ENCODE measurements at regions of chr11 and their contacts with region 1.

Region 1: GRCh38 chr11:46238967-46239800 is 38.3 kb upstream of the CREB3L1 start:
- ATAC-seq: peak; percentile 54 to 84 (median 82)
- H3K4me3 ChIP-seq: peak overlapping the region; percentile 12 to 27 (median 21)
- H3K27ac ChIP-seq: peak overlapping the region; percentile 85 to 90
- H3K4me1 ChIP-seq: peaks cover 32 to 38% of the 10 kb centered on the region in 2 donors

Region 2: DNA sequence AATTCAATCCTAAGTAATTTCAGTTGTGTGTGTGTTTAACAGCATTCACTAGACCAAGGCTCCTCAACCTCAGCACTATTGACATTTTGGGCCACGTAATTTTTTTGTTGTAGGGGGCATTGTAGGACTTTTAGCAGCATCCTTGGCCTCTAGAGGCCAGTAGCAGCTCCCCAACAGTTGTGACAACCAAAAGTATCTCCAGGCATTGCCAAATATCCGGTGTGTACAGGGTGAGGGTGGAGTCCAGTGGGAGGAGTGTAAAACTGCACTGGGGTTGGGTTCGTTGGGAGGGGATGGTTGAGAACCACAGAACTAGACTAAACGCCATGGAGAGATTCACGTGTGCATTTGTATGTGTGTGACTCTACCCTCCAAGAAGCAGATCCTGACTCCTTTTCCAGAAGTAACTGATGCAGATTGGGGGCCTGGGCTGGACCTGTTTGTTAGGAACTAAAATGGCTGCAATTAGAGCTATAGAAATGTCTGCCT is 112.0 kb before region 1 on chr11:
- in situ Hi-C with region 1: loop called in 1 of 9 experiments (anchors 25 kb)
- ATAC-seq: peak in 3 of 8 experiments; percentile 94 to 96 (median 95)
- H3K4me3 ChIP-seq: no peak overlapping the region
- H3K27ac ChIP-seq: no peak overlapping the region
- H3K4me1 ChIP-seq: peaks cover 0 to 6% of the 10 kb centered on the region in 2 donors

Region 3: GRCh38 chr11:46315033-46315738 is 76.0 kb after region 1 on chr11:
- in situ Hi-C with region 1: loop called in 1 of 9 experiments (anchors 10 kb)
- ATAC-seq: peak in 5 of 8 experiments; percentile 22 to 97 (median 87)
- H3K4me3 ChIP-seq: no peak overlapping the region
- H3K27ac ChIP-seq: no peak overlapping the region
- H3K4me1 ChIP-seq: no peaks in the 10 kb centered on the region

Region 4: DNA sequence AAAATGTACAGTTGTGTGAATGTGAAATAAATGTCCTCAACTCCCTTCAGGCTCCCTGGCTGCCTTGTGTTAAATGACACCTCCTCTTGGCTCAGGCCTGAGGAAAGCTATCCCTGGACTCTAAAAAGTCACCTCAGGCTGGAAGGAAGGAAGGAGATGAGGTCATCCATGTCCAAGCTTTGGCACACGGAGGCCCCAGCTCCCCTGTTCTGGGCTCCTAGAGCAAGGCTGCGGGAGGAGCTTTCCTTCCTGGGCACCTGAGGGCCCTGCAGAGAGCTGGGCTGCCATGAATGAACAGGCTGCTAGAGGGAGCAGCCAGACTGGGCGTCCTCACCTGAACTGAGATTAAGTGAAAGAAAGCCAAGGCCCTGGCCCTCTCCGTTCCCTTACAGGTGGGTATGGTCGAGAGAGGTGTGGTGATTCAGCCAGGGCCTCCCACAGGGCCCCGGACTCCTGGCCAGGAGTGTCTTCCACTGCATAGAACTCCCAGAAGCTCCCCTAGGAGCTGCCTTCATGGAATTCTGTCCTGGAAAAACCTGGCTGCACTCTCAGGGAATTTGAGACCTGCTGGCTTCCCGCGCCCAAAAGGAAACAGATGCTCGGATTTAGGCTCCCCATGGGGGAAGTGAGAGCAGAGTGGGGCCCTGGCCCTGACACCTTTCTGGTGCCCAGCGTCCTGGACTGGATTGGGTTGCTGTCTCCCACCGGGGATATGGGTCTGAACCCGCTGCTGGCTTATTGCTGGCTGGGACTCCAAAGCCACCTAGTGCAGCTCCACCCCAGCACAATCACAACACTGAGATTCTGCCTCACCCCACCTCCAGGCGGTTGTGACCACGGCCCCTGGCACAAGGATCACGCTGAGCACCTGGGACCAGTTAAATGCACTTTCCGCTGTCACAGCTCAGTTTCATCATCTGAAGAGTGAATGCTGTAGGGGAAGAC is 1091.1 kb after region 1 on chr11:
- in situ Hi-C with region 1: no loop called
- ATAC-seq: peak in 7 of 8 experiments; percentile 12 to 79 (median 65)
- H3K4me3 ChIP-seq: no peak overlapping the region
- H3K27ac ChIP-seq: no peak overlapping the region
- H3K4me1 ChIP-seq: no peaks in the 10 kb centered on the region

Measured in motor neuron (in vitro differentiated cells).